ENCODE measurements at regions of chr11 and their contacts with region 1.

Region 1: DNA sequence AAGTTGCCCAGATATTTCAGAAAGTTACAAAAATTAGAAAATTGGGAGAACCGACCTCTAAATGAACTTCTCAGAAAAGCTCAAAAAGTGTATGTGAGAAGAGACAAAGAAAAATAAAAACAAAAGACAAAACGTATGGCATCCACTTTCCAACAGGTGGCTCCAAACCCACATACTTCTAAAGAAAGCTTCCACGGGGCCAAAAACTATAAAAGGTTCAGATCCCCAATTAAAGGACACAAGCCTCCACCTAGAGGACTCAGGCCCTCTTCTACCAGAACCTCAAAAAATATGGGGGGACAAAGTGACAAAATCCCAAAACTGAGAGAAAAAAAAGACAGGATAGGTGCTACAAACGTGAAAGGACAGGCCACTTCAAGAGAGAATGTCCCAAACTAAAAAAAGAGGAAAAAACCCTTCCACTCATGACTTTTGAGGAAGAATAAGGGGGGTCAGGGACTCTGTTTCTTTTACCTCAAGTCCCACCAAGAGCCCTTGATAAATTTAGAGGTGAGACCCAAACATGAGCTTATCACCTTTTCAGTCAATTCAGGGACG is 8.8 kb downstream of the SCGB2A1 start:
- DNase-seq: no peak
- ATAC-seq: no peak
- H3K4me3 ChIP-seq: no peak overlapping the region
- H3K27ac ChIP-seq: no peak overlapping the region
- H3K4me1 ChIP-seq: no peaks in the 10 kb centered on the region
- H3K27me3 ChIP-seq: no peaks in the 10 kb centered on the region; a peak in 1 of 4 replicates
- CTCF ChIP-seq: peak; percentile 38 to 47 (median 45); a peak in 5 of 6 replicates
- EP300 ChIP-seq: no peak
- POLR2A ChIP-seq: no peak
- RAD21 ChIP-seq: peak; percentile 51

Region 2: DNA sequence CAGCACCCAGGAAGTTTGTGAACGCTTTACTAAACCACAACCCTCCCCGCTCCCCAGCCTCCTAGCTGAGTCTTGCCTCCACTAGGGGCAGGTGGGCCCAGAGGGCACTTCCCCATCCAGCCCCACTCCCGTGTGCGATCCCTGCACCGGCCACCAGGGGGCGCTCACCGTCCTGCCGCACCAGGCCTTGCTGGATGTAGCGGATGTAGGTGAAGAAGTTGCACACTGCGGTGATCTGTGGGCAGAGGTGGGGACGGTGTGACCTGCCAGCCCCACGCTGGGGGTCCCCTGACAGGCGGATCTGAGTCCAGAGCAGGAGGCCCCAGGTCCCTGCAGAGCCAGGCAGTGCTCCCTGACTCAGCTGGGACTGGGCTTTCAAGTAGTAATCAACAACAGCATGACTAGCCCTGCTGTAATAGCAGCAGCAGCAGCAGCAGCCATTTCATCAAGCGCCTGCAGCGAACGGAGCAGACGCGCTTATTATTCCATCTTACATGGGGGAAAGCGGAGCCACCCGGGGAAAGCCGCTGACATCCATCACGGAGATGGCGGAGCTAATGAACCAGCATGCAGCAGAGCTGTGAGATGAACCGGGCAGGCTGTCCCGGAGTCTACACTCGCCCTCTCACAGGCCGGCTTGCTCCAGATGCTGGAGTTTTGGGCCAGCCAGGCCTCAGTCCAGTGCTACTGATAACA is 318.0 kb before region 1 on chr11:
- CTCF ChIA-PET with region 1: no interaction called
- POLR2A ChIA-PET with region 1: no interaction called
- RAD21 ChIA-PET with region 1: no interaction called
- SMC1A ChIA-PET with region 1: no interaction called
- in situ Hi-C with region 1: no loop called
- intact Hi-C with region 1: no loop called
- DNase-seq: peak; percentile 40
- ATAC-seq: peak; percentile 95
- H3K4me3 ChIP-seq: no peak overlapping the region
- H3K27ac ChIP-seq: no peak overlapping the region
- H3K4me1 ChIP-seq: no peaks in the 10 kb centered on the region
- H3K27me3 ChIP-seq: peaks cover 0 to 1% of the 10 kb centered on the region in 2 experiments; a peak in 1 of 4 replicates
- CTCF ChIP-seq: peak; percentile 99 to 100 (median 99)
- EP300 ChIP-seq: no peak
- POLR2A ChIP-seq: no peak
- RAD21 ChIP-seq: peak; percentile 85

Region 3: DNA sequence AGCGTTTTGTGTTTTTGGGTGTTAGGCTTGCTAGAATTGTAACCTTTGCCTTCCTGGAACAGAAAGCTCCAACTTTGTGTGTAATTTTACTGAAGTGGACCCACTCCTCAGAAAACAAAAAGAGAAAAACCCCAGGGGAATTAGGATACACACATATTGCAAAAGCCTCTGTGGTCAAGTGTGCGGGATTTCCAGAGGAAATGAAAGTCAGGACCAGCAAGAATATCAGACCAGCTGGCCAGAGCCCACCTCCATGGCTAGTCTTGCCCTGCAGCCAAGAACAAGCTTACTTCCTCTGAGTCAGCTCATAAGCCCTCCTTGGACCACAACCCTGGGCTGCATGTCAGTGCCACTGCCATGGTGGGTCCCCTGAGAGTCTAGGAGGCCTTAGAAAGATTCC is 212.8 kb before region 1 on chr11:
- CTCF ChIA-PET with region 1: no interaction called
- POLR2A ChIA-PET with region 1: no interaction called
- RAD21 ChIA-PET with region 1: no interaction called
- SMC1A ChIA-PET with region 1: no interaction called
- in situ Hi-C with region 1: no loop called
- intact Hi-C with region 1: no loop called
- DNase-seq: peak; percentile 66
- ATAC-seq: peak; percentile 98
- H3K4me3 ChIP-seq: no peak overlapping the region
- H3K27ac ChIP-seq: peak overlapping the region; percentile 39; the same call in 1 of the 2 replicates
- H3K4me1 ChIP-seq: peaks cover 12% of the 10 kb centered on the region
- H3K27me3 ChIP-seq: no peaks in the 10 kb centered on the region
- CTCF ChIP-seq: no peak
- EP300 ChIP-seq: 0 out of 4 replicates have a peak, but pooled peaks of 1 of the 2 experiments have one; percentile 16
- POLR2A ChIP-seq: no peak
- RAD21 ChIP-seq: no peak

Region 4: DNA sequence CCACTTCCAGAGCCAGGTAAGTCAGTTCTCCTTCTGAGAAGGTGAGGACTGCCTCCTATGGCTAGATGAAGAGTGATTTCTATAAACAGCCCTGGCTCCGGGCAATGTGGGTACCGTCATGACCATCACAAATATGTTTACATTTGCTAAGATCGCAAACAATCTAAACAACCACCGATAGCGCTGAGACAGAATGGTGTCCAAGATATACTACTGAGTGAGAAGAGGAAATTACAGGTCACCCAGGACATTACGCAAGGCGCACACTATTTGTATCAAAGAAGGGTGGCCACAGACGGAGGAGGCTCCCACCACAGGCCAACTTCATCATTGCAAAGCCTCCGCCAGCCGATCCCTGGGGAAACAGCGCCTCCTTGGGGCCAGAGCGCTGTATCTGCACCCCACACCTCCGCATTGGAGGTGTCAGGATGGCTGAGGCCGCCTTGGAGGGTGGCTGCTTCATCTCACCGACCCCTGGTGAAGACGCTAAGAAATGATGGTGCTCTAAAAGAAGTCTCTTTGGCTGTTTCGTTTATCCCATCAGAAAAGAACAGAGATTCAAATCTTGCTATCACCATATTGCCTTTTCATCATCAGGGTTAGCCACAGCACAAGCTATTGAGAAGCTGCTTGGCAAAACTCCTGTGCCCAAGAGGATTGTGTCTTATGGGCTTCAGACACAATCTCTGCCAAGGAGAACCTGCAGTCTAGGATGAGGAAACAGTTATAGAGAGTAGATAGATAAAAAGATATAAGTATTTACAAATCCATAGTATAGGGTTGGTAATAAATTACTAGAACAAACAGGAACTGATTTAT is 107.7 kb after region 1 on chr11:
- CTCF ChIA-PET with region 1: interaction called, 3 read pairs
- POLR2A ChIA-PET with region 1: no interaction called
- RAD21 ChIA-PET with region 1: no interaction called
- SMC1A ChIA-PET with region 1: interaction called, 4 read pairs
- in situ Hi-C with region 1: no loop called
- intact Hi-C with region 1: loop called (anchors 5 kb)
- DNase-seq: no peak
- ATAC-seq: peak; percentile 94
- H3K4me3 ChIP-seq: no peak overlapping the region
- H3K27ac ChIP-seq: no peak overlapping the region
- H3K4me1 ChIP-seq: no peaks in the 10 kb centered on the region
- H3K27me3 ChIP-seq: no peaks in the 10 kb centered on the region; a peak in 2 of 4 replicates
- CTCF ChIP-seq: peak; percentile 69 to 75 (median 72)
- EP300 ChIP-seq: no peak
- POLR2A ChIP-seq: no peak
- RAD21 ChIP-seq: peak; percentile 57